WTC11 (cell line): ENCODE measurements at regions of chr6 and their contacts with region 1.

Region 1: GRCh38 chr6:125753218-125753936 is 3.9 kb downstream of the HEY2 start:
- DNase-seq: no peak
- ATAC-seq: no peak
- H3K4me3 Mint-ChIP-seq: peak overlapping the region; percentile 58
- H3K27ac Mint-ChIP-seq: peak overlapping the region; percentile 89
- H3K4me1 Mint-ChIP-seq: peaks cover 56% of the 10 kb centered on the region
- H3K27me3 Mint-ChIP-seq: peaks cover 10% of the 10 kb centered on the region
- CTCF ChIP-seq: no peak

Region 2: GRCh38 chr6:125314019-125314581 is 439.3 kb before region 1 on chr6:
- CTCF ChIA-PET with region 1: interaction called, 21 read pairs
- POLR2A ChIA-PET with region 1: no interaction called
- DNase-seq: peak; percentile 64
- ATAC-seq: peak; percentile 77
- H3K4me3 Mint-ChIP-seq: no peak overlapping the region
- H3K27ac Mint-ChIP-seq: no peak overlapping the region
- H3K4me1 Mint-ChIP-seq: peaks cover 12% of the 10 kb centered on the region
- H3K27me3 Mint-ChIP-seq: no peaks in the 10 kb centered on the region
- CTCF ChIP-seq: no peak; the same call in 1 of the 2 replicates

Region 3: DNA sequence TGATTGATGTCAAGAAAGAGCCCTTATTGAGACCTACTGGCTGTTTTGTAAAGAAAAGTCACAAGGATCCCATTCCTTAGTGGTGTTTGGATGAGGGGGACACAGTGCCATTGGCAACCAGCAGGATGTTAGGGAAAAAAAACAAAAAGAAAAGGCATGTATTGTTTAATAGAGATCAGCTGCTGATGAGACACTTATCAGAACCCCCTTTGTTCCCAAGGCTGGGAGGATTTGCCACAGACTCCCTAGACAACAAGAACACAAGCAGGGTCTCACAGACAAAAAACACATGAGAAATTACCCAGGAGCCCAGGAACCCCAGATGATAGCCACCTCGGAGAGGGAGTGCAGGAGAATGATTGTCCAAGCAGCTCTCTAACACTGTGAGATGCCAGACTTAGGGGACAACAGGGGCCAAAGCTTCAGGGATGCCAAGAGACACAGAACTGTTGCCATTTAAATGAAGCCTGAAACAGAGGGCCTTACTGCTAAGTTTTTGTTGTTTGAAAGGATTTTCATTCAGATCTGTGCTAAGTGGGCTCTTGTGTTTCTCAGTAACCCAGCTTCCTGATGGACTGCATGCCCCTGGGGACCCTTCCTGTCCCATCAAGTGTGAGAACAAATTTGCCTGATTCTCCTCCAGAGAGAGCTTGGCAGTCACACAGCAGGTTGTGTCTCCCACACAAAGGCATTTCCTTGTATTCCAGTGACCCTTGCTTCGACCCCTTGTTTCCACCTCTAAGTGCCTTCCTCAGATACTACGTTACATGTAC is 52.6 kb before region 1 on chr6:
- CTCF ChIA-PET with region 1: interaction called, 16 read pairs
- POLR2A ChIA-PET with region 1: interaction called, 4 read pairs
- DNase-seq: no peak
- ATAC-seq: peak; percentile 75
- H3K4me3 Mint-ChIP-seq: peak overlapping the region; percentile 99
- H3K27ac Mint-ChIP-seq: peak overlapping the region; percentile 95
- H3K4me1 Mint-ChIP-seq: peaks cover 66% of the 10 kb centered on the region
- H3K27me3 Mint-ChIP-seq: peaks cover 2% of the 10 kb centered on the region; the same call in 1 of the 2 replicates
- CTCF ChIP-seq: no peak

Region 4: GRCh38 chr6:125812394-125813292 is 59.3 kb after region 1 on chr6:
- CTCF ChIA-PET with region 1: no interaction called
- POLR2A ChIA-PET with region 1: no interaction called
- DNase-seq: no peak
- ATAC-seq: no peak
- H3K4me3 Mint-ChIP-seq: no peak overlapping the region
- H3K27ac Mint-ChIP-seq: no peak overlapping the region
- H3K4me1 Mint-ChIP-seq: peaks cover 6% of the 10 kb centered on the region; the same call in 1 of the 2 replicates
- H3K27me3 Mint-ChIP-seq: no peaks in the 10 kb centered on the region
- CTCF ChIP-seq: no peak

Region 5: GRCh38 chr6:125944434-125944816 is 191.0 kb after region 1 on chr6:
- CTCF ChIA-PET with region 1: no interaction called
- POLR2A ChIA-PET with region 1: no interaction called
- DNase-seq: no peak
- ATAC-seq: no peak
- H3K4me3 Mint-ChIP-seq: no peak overlapping the region
- H3K27ac Mint-ChIP-seq: no peak overlapping the region
- H3K4me1 Mint-ChIP-seq: no peaks in the 10 kb centered on the region
- H3K27me3 Mint-ChIP-seq: no peaks in the 10 kb centered on the region; the same call in 1 of the 2 replicates
- CTCF ChIP-seq: no peak

Region 6: GRCh38 chr6:126002755-126003679 is 249.6 kb after region 1 on chr6:
- CTCF ChIA-PET with region 1: no interaction called
- POLR2A ChIA-PET with region 1: no interaction called
- DNase-seq: no peak
- ATAC-seq: no peak
- H3K4me3 Mint-ChIP-seq: no peak overlapping the region
- H3K27ac Mint-ChIP-seq: no peak overlapping the region
- H3K4me1 Mint-ChIP-seq: no peaks in the 10 kb centered on the region
- H3K27me3 Mint-ChIP-seq: no peaks in the 10 kb centered on the region
- CTCF ChIP-seq: no peak

Region 7: GRCh38 chr6:126063512-126064146 is 310.3 kb after region 1 on chr6:
- CTCF ChIA-PET with region 1: no interaction called
- POLR2A ChIA-PET with region 1: no interaction called
- DNase-seq: no peak
- ATAC-seq: peak; percentile 63
- H3K4me3 Mint-ChIP-seq: no peak overlapping the region
- H3K27ac Mint-ChIP-seq: peak overlapping the region; percentile 3
- H3K4me1 Mint-ChIP-seq: peaks cover 9% of the 10 kb centered on the region
- H3K27me3 Mint-ChIP-seq: no peaks in the 10 kb centered on the region
- CTCF ChIP-seq: no peak